Endothelial cell of umbilical vein (primary cell): ENCODE measurements at regions of chr9 and their contacts with region 1.

Region 1: GRCh38 chr9:134325817-134326723 is at the start of gene RXRA:
- DNase-seq: peak; percentile 56
- H3K4me3 ChIP-seq: peak within 1 kb of the TSS; percentile 59 to 84 (median 75)
- H3K27ac ChIP-seq: peak within 1 kb of the TSS; percentile 82
- H3K4me1 ChIP-seq: peaks cover 21% of the 10 kb centered on the region
- H3K27me3 ChIP-seq: no peaks in the 10 kb centered on the region
- CTCF ChIP-seq: no peak
- POLR2A ChIP-seq: peak; percentile 80
- total RNA-seq, gene RXRA: 37.4 and 38.9 TPM in 2 replicates

Region 2: DNA sequence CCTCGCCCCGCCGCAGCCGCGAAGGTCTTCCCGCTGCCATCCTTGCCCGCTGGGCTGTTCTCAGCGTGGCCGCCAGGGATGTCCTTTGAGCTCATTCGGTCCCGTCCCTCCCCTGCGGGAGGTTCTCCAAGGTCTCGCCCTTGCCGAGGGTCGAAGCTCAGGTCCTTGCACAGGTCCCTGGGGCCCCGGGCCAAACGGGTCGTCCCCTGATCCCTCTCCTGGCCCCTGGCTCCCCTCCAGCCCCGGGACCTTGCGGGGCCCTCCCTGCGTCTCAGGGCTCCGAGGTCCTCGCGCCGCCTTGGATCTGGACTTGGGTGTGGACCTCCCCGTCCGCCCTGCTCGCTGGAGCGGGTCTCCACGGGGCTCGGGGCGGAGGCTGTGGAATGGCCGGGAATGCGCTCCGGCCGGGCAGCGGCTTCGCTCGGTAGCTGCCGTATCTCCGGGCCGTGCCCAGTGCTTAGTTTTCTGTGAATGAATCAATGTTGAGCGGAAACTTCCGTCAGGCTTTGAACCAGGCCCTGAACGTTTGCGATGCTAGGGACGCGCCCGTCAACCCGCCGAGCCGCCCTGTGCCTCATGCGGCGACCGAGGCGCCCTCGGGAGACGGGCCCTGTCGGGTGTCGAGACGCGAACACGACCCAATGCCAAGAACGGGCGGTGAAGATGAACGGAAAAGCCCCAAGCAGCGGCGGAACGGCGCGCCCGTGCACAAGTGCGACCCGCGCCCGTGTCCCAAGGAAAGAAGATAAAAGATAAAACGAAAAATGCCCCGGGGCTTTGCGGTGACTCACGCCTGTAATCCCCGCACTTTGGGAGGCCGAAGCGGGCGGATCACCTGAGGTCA is 162.5 kb before region 1 on chr9:
- CTCF ChIA-PET with region 1: no interaction called
- POLR2A ChIA-PET with region 1: no interaction called
- dilution Hi-C with region 1: no loop called
- intact Hi-C with region 1: loop called (anchors 1 kb)
- DNase-seq: peak; percentile 62
- H3K4me3 ChIP-seq: peak overlapping the region; percentile 6 to 30 (median 25)
- H3K27ac ChIP-seq: peak overlapping the region; percentile 35
- H3K4me1 ChIP-seq: peaks cover 4% of the 10 kb centered on the region
- H3K27me3 ChIP-seq: no peaks in the 10 kb centered on the region
- CTCF ChIP-seq: peak; percentile 34 to 68
- POLR2A ChIP-seq: no peak

Region 3: DNA sequence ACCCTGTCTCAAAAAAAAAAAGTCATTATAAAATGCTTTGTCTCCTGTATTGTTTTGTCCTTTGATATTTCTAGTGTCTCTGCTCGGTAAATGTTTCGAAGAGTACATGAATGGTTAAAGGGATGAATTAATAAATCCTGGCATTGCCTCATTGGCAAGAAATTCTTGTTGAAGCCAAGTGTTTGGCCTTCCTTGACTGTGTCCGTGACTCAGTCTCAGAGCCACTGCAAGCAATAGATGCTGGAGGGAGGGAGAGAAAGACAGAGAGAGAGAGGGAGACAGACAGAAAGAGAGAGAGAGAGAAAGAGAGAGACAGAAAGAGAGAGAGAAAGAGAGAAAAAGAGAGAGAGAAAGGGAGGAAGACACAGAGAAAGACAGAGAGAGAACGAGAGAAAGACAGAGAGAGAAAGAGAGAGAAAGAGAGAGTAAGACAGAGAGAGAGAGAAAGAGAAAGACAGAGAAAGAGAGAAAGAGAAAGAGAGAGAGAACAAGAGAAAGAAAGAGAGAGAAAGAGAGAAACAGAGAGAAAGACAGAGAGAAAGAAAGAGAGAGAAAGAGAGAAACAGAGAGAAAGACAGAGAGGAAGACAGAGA is 72.4 kb before region 1 on chr9:
- CTCF ChIA-PET with region 1: no interaction called
- POLR2A ChIA-PET with region 1: no interaction called
- dilution Hi-C with region 1: no loop called
- intact Hi-C with region 1: no loop called
- DNase-seq: no peak
- H3K4me3 ChIP-seq: no peak overlapping the region
- H3K27ac ChIP-seq: no peak overlapping the region
- H3K4me1 ChIP-seq: no peaks in the 10 kb centered on the region
- H3K27me3 ChIP-seq: peaks cover 0 to 2% of the 10 kb centered on the region in 2 experiments
- CTCF ChIP-seq: no peak
- POLR2A ChIP-seq: no peak

Region 4: DNA sequence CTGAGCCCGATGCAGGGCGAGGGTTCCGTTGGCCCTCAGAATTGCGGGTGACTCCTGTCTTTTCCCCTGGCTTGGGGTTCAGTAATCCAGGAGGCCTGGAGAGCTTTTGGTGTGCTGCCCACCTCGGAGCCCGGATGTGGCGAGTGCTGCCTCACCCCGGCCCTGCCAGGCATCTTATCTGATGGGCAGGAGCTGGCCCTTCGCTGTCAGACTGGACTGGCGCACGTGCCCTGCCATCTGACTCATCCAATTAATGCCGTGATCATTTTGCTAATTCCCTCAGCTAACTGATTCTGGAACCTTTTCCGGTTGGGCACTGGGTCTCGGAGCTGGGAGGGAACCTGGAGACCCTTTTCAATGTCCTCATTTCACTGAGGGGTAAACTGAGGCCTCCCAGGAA is 34.8 kb after region 1 on chr9:
- CTCF ChIA-PET with region 1: interaction called, 12 read pairs
- POLR2A ChIA-PET with region 1: no interaction called
- dilution Hi-C with region 1: no loop called
- intact Hi-C with region 1: no loop called
- DNase-seq: peak; percentile 35
- H3K4me3 ChIP-seq: no peak overlapping the region
- H3K27ac ChIP-seq: no peak overlapping the region
- H3K4me1 ChIP-seq: peaks cover 11% of the 10 kb centered on the region
- H3K27me3 ChIP-seq: no peaks in the 10 kb centered on the region
- CTCF ChIP-seq: no peak
- POLR2A ChIP-seq: no peak

Region 5: GRCh38 chr9:134407123-134407808 is 81.2 kb after region 1 on chr9:
- CTCF ChIA-PET with region 1: no interaction called
- POLR2A ChIA-PET with region 1: no interaction called
- dilution Hi-C with region 1: no loop called
- intact Hi-C with region 1: loop called (anchors 1 kb)
- DNase-seq: peak; percentile 94
- H3K4me3 ChIP-seq: no peak overlapping the region
- H3K27ac ChIP-seq: peak overlapping the region; percentile 94
- H3K4me1 ChIP-seq: peaks cover 47% of the 10 kb centered on the region
- H3K27me3 ChIP-seq: no peaks in the 10 kb centered on the region
- CTCF ChIP-seq: no peak
- POLR2A ChIP-seq: no peak

Region 6: GRCh38 chr9:134641173-134641985 is 315.3 kb after region 1 on chr9 and contains the start of gene COL5A1:
- CTCF ChIA-PET with region 1: no interaction called
- POLR2A ChIA-PET with region 1: no interaction called
- dilution Hi-C with region 1: no loop called
- intact Hi-C with region 1: loop called (anchors 5 kb)
- DNase-seq: peak; percentile 93
- H3K4me3 ChIP-seq: peak within 1 kb of the TSS; percentile 80 to 83 (median 80)
- H3K27ac ChIP-seq: peak within 1 kb of the TSS; percentile 67
- H3K4me1 ChIP-seq: peaks cover 28% of the 10 kb centered on the region
- H3K27me3 ChIP-seq: no peaks in the 10 kb centered on the region
- CTCF ChIP-seq: peak in 1 of 2 donors; percentile 23
- POLR2A ChIP-seq: peak; percentile 79
- total RNA-seq, gene COL5A1: 164 and 175 TPM in 2 replicates